ENCODE measurements at regions of chr1 and their contacts with region 1.

Region 1: DNA sequence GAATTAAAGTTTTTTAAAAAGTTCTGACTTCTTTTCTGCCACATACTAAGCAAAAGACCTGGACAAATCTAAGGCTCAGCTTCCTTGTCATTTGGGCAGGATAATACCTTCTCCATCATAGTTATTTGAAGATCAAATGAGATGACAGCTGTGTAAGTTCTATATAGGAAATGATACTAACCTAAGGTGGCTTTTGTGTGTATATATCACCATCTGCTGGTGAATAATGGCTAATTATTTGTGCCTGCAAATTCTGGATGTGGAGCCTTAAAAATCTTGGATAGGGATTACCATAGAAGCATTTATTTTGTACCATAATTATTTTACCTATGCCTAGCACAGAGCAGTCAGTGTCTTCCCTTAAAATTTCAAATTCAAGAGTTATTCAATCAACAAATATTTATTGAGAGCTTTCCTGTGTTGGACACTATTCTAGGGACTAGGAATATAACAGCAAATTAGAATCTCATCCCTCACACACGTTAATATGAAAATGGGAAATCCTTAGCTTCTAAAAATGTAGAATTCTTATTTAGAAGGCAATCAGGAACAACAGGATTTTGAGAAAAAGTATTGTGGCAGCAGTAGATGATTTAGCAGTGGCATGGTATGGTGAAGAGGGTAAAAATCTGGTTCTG is 89.8 kb downstream of the TMEM200B start:
- DNase-seq: no peak
- H3K4me3 Mint-ChIP-seq: no peak overlapping the region
- H3K27ac Mint-ChIP-seq: no peak overlapping the region
- H3K4me1 Mint-ChIP-seq: no peaks in the 10 kb centered on the region
- H3K27me3 Mint-ChIP-seq: no peaks in the 10 kb centered on the region

Region 2: GRCh38 chr1:28789412-28789811 is 244.5 kb before region 1 on chr1:
- CTCF ChIA-PET with region 1: no interaction called
- intact Hi-C with region 1: loop called (anchors 5 kb)
- DNase-seq: no peak
- H3K4me3 Mint-ChIP-seq: no peak overlapping the region
- H3K27ac Mint-ChIP-seq: no peak overlapping the region
- H3K4me1 Mint-ChIP-seq: peaks cover 3% of the 10 kb centered on the region
- H3K27me3 Mint-ChIP-seq: no peaks in the 10 kb centered on the region

Region 3: GRCh38 chr1:29688471-29689365 is 654.8 kb after region 1 on chr1:
- CTCF ChIA-PET with region 1: no interaction called
- intact Hi-C with region 1: no loop called
- DNase-seq: peak; percentile 19
- H3K4me3 Mint-ChIP-seq: no peak overlapping the region
- H3K27ac Mint-ChIP-seq: peak overlapping the region; percentile 8
- H3K4me1 Mint-ChIP-seq: peaks cover 7% of the 10 kb centered on the region
- H3K27me3 Mint-ChIP-seq: peaks cover 25% of the 10 kb centered on the region